ENCODE measurements at regions of chr5 and their contacts with region 1.

Region 1: GRCh38 chr5:98309785-98310598 is 463.5 kb upstream of the RGMB start:
- DNase-seq: peak; percentile 99
- ATAC-seq: peak; percentile 78
- H3K4me3 ChIP-seq: peak overlapping the region; percentile 24; the same call in 1 of the 2 replicates
- H3K27ac ChIP-seq: peak overlapping the region; percentile 77
- H3K4me1 ChIP-seq: peaks cover 15% of the 10 kb centered on the region; the same call in 1 of the 2 replicates
- H3K27me3 ChIP-seq: no peaks in the 10 kb centered on the region
- CTCF ChIP-seq: 0 out of 2 replicates have a peak, but pooled peaks have one; percentile 9
- POLR2A ChIP-seq: peak; percentile 81; the same call in 1 of the 2 replicates
- RAD21 ChIP-seq: peak; percentile 47

Region 2: DNA sequence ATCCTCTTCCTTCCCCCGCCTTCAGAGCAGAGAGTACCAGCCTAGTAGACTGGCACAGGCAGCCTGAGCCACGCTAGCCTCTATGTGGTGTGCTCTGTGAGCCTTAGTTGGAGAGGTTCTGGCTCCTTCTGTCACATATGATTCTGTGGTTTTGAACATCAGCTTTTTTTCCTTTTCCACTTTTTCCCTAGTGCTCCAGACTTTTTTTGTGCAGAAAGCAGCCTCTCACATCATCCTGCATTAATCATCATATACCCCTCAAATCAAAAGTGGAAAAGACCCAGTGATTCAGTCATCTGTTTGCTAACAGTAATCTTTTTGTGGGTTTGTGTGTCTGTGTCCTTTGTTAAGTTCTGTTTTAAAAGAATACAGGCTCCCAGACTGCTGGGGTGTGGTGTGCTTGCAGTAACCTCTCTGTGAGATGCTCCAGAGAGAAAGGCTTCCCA is 200.4 kb before region 1 on chr5:
- CTCF ChIA-PET with region 1: no interaction called
- POLR2A ChIA-PET with region 1: no interaction called
- dilution Hi-C with region 1: no loop called
- in situ Hi-C with region 1: no loop called
- intact Hi-C with region 1: loop called (anchors 1 kb)
- DNase-seq: peak; percentile 92
- ATAC-seq: peak; percentile 28
- H3K4me3 ChIP-seq: peak overlapping the region; percentile 3; the same call in 1 of the 2 replicates
- H3K27ac ChIP-seq: peak overlapping the region; percentile 99
- H3K4me1 ChIP-seq: peaks cover 10% of the 10 kb centered on the region
- H3K27me3 ChIP-seq: no peaks in the 10 kb centered on the region
- CTCF ChIP-seq: no peak
- POLR2A ChIP-seq: peak; percentile 77; the same call in 1 of the 2 replicates
- RAD21 ChIP-seq: peak; percentile 20; the same call in 1 of the 2 replicates

Region 3: DNA sequence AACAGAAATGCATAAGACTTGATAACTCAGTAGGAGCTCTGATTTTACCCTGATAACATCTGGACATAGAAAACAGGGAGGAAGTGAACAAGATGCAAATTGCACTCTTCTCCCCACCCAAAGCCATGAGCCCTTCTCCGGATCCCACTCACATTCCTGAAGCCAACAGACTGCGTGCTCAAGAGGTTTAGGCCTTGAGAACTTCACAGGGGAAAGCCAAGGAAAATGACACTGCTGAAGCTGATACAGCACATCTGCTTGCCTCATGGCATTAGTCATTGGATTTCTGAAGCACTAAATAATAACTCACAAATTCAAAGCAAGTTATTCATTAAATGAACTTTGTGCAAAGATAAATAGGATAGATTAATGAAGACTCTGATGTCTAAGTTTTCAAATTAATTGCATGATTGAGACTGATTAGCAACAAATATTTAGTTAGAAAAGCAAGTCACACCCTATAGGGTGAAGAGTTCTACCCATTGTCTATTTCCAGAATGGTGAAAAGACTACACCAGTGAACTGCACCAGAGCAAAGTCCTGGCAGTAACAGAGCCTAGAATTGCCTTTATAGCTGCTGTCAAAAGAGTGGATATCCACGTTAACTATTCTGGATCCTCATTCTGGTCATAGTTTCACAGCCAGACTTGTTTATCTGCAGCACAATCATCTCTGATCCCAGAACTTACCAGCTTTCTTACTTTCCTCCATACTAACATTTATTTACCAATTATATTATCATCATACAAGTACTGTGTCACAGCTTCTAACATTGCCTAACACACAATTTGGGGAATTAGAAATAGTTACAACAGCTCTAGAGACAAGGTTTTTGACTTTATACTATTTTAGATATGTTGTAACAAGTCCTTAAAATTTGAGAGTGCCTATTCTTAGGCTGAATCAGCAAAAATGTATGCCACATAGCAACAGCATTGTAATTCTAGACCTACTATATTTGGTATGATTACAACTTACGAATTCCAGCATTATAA is 31.3 kb after region 1 on chr5:
- CTCF ChIA-PET with region 1: no interaction called
- POLR2A ChIA-PET with region 1: no interaction called
- dilution Hi-C with region 1: no loop called
- in situ Hi-C with region 1: no loop called
- intact Hi-C with region 1: loop called (anchors 1 kb)
- DNase-seq: peak; percentile 99
- ATAC-seq: peak; percentile 96
- H3K4me3 ChIP-seq: no peak overlapping the region
- H3K27ac ChIP-seq: peak overlapping the region; percentile 72
- H3K4me1 ChIP-seq: peaks cover 7% of the 10 kb centered on the region
- H3K27me3 ChIP-seq: no peaks in the 10 kb centered on the region
- CTCF ChIP-seq: no peak
- POLR2A ChIP-seq: no peak
- RAD21 ChIP-seq: peak; percentile 25; the same call in 1 of the 2 replicates

Region 4: GRCh38 chr5:98454904-98455303 is 144.9 kb after region 1 on chr5:
- CTCF ChIA-PET with region 1: no interaction called
- POLR2A ChIA-PET with region 1: no interaction called
- dilution Hi-C with region 1: no loop called
- in situ Hi-C with region 1: no loop called
- intact Hi-C with region 1: loop called (anchors 2 kb)
- DNase-seq: peak; percentile 97
- ATAC-seq: peak; percentile 69
- H3K4me3 ChIP-seq: peak overlapping the region; percentile 23; the same call in 1 of the 2 replicates
- H3K27ac ChIP-seq: peak overlapping the region; percentile 38; the same call in 1 of the 2 replicates
- H3K4me1 ChIP-seq: peaks cover 8% of the 10 kb centered on the region
- H3K27me3 ChIP-seq: no peaks in the 10 kb centered on the region
- CTCF ChIP-seq: peak; percentile 44
- POLR2A ChIP-seq: no peak
- RAD21 ChIP-seq: peak; percentile 62

Region 5: GRCh38 chr5:98779264-98779877 is 469.4 kb after region 1 on chr5:
- CTCF ChIA-PET with region 1: no interaction called
- POLR2A ChIA-PET with region 1: no interaction called
- dilution Hi-C with region 1: no loop called
- in situ Hi-C with region 1: no loop called
- intact Hi-C with region 1: no loop called
- DNase-seq: no peak
- ATAC-seq: no peak
- H3K4me3 ChIP-seq: peak overlapping the region; percentile 5; the same call in 1 of the 2 replicates
- H3K27ac ChIP-seq: peak overlapping the region; percentile 4; the same call in 1 of the 2 replicates
- H3K4me1 ChIP-seq: peaks cover 24% of the 10 kb centered on the region
- H3K27me3 ChIP-seq: no peaks in the 10 kb centered on the region
- CTCF ChIP-seq: no peak
- POLR2A ChIP-seq: no peak
- RAD21 ChIP-seq: no peak

Measured in IMR-90 (cell line).